Mucosa of descending colon (tissue), 3 donors: ENCODE measurements at regions of chr1 and their contacts with region 1.

Region 1: GRCh38 chr1:44294588-44295007 is 60.5 kb downstream of the ERI3 start:
- DNase-seq: peak; percentile 68 to 78 (median 71)
- ATAC-seq: peak; percentile 84
- H3K4me3 ChIP-seq: no peak overlapping the region
- H3K4me1 ChIP-seq: peaks cover 17% of the 10 kb centered on the region
- CTCF ChIP-seq: no peak

Region 2: DNA sequence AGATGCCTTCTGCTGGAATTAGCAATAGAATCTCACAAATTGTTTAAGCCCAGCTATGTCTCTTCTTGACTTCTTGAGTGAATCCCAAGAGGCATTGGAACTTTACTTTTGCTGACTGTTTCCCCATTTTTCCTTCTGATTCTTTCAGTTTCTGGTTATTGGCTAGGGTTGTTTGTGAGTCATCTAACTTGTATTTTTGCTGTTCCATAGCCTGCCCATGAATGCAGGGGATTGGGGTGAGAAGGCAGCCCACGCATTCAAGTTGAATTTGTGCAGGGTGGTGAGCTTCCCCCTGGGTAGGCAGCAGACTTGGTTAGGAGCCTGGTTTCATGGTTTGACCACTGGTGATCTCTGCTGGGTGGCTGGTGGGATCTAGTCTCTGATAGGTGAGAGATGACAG is 186.4 kb before region 1 on chr1:
- intact Hi-C with region 1: no loop called
- DNase-seq: no peak
- ATAC-seq: no peak
- H3K4me3 ChIP-seq: no peak overlapping the region
- H3K4me1 ChIP-seq: no peaks in the 10 kb centered on the region
- CTCF ChIP-seq: no peak

Region 3: DNA sequence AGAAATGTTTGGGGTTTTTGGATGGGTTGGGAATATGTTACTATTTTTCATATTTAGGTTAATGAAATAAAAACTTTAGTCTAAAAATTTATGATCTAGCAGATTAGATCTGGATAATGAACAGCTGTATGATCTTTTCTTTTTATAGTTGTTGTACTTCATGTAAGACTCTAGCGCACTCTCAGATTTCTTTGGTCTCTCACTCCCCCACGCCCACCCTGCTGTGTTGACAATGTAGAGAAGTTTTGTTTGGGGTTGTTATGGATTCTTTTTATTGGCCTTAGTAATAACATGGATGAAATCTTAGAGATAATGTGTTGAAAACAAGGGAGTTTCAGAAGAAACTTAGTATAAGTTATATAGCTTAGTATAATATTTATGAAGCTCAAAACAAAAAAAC is 158.7 kb before region 1 on chr1:
- intact Hi-C with region 1: no loop called
- DNase-seq: no peak
- ATAC-seq: no peak
- H3K4me3 ChIP-seq: no peak overlapping the region
- H3K4me1 ChIP-seq: no peaks in the 10 kb centered on the region
- CTCF ChIP-seq: no peak

Region 4: GRCh38 chr1:44213222-44214112 is 81.1 kb before region 1 on chr1 and contains the start of gene DMAP1:
- intact Hi-C with region 1: loop called in 1 of 2 experiments (anchors 10 kb)
- DNase-seq: peak; percentile 83 to 90 (median 89)
- ATAC-seq: peak; percentile 94
- H3K4me3 ChIP-seq: peak within 1 kb of the TSS; percentile 73
- H3K4me1 ChIP-seq: peaks cover 12% of the 10 kb centered on the region
- CTCF ChIP-seq: no peak
- total RNA-seq, gene DMAP1: 40.8 to 52.0 (median 44.0) TPM

Region 5: GRCh38 chr1:44261171-44261817 is 33.3 kb before region 1 on chr1:
- intact Hi-C with region 1: loop called in 1 of 2 experiments (anchors 2 kb)
- DNase-seq: peak in 1 of 3 donors; percentile 76
- ATAC-seq: peak; percentile 68
- H3K4me3 ChIP-seq: no peak overlapping the region
- H3K4me1 ChIP-seq: peaks cover 47% of the 10 kb centered on the region
- CTCF ChIP-seq: no peak